HEK293 (cell line): ENCODE measurements at regions of chr6 and their contacts with region 1.

Region 1: GRCh38 chr6:33248925-33249731 is 22.5 kb downstream of the VPS52 start:
- H3K4me3 ChIP-seq: peak overlapping the region; percentile 62
- H3K27ac ChIP-seq: peak overlapping the region; percentile 88
- H3K4me1 ChIP-seq: peaks cover 12% of the 10 kb centered on the region
- CTCF ChIP-seq: 0 out of 2 replicates have a peak, but pooled peaks have one; percentile 35

Region 2: DNA sequence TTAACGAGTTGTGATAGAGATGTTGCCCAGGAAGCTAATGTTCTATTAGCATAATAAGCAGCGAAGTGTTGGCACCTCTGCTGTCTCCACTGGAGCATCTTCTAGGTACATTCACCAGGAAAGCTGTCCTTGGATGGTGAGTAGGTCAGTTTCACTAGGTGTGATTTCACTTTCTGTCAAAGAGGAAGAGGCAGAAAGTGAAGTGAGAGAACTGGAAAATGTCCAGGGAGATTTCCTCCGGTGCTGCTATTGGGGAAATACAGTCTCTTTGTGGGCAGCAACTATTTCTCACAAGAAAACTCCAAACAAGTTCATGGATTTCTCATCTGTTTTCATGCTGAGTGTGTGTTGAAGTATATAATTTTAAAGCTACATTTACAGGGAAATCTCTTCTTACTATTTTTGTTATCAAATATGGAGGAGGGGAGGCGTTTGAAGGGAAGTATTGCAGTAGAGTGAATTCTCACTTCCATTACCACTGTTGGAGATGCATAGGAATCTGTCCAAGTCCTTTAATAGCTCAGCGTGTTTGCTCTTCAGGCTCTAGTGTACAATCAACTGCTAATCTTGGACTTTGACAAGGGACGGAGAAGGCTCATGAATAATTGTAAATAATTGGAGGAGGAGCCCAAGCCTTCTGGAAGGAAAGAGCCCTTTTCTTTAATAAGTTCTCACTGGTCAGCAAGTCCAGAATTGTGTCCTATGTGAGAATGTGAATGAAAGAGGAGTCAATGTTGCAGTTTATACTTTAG is 861.4 kb before region 1 on chr6:
- CTCF ChIA-PET with region 1: no interaction called
- POLR2A ChIA-PET with region 1: no interaction called
- H3K4me3 ChIP-seq: no peak overlapping the region
- H3K27ac ChIP-seq: no peak overlapping the region
- H3K4me1 ChIP-seq: no peaks in the 10 kb centered on the region
- CTCF ChIP-seq: no peak

Region 3: DNA sequence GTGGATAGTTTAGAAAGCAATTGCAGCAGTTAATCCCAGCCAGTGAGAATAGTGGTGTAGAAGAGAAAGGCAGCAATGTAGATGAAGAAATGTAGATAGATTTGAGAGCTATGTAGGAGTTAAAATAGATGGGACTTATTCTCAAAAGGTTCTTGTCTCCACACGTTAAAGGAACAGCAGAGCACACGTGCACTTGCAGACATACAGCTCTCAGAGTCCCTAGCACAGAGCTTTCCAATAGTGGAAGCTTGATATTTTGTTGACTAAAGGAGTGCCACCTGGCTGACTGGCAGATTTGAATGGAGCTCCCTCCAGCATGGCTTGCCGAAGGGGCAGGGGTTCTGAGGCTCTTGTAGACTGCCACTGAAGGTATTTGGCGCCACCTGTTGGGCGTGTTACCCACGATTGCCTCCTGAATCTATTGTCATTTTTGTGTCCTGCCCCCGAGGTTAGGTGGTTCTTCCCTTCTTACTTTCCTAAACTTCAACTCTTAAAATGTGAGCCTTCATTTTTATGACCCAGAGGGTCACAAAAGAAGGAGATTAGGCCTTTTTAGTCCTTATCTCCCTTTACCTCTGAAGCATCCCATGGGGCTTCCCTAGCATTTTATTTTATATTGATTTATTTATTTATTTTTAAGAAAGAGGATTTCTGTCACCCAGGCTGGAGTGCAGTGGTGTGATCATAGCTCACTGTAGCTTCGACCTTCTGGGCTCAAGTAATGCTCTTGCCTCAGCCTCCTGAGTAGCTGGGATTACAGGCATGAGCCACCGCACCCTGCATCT is 264.3 kb before region 1 on chr6:
- CTCF ChIA-PET with region 1: interaction called, 10 read pairs
- POLR2A ChIA-PET with region 1: interaction called, 8 read pairs
- H3K4me3 ChIP-seq: no peak overlapping the region
- H3K27ac ChIP-seq: no peak overlapping the region
- H3K4me1 ChIP-seq: peaks cover 4% of the 10 kb centered on the region; the same call in 1 of the 2 replicates
- CTCF ChIP-seq: peak; percentile 85

Region 4: GRCh38 chr6:33118525-33119123 is 130.5 kb before region 1 on chr6:
- CTCF ChIA-PET with region 1: interaction called, 76 read pairs
- POLR2A ChIA-PET with region 1: no interaction called
- H3K4me3 ChIP-seq: no peak overlapping the region
- H3K27ac ChIP-seq: no peak overlapping the region
- H3K4me1 ChIP-seq: no peaks in the 10 kb centered on the region
- CTCF ChIP-seq: 0 out of 2 replicates have a peak, but pooled peaks have one; percentile 20

Region 5: DNA sequence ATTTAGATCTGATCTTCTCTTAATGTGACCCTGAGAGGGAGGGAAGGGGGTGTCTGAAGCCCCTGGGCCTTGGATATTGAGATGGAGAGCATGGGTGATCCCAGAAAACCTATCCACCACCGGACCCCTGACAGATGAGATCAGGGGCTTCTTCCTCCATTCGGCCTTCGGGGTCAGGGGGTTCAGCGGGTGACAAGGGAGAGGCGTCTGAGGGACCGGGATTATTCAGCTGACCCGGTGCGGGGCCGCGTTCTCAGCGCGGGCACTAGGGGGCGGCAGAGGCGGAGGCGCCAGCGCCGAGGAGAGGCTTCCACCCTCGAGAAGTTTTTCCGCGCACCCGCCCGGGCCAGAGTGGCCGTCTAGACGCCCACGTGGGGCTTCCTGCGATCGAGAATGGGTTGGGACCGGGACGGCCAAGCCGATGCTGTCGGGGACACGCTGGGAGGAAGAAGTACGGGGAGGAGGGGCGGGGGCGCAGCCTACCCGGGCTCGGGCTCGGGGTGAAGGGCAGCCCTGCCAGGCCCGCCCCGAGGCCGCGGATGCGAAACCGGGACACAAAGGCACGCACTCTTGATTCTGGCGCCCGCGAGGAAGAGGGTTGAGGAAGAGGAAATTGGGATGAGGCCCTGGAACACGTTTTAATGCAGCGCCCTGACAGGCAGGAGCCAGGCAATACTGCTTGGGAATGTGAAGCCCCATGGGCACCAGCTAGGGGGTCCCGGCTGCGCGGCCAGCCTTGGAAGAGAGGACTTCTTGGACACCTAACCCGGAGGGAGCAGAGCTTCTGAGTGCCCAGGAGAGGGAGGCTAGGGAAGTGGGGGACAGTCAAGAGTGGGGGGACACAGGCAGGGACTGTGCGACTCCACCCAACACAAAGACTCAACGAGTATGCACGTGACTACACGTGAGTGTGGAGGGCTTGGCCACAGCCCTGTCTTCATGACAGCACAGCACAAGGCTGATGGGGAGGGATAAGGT is 87.5 kb before region 1 on chr6:
- CTCF ChIA-PET with region 1: interaction called, 59 read pairs
- POLR2A ChIA-PET with region 1: interaction called, 4 read pairs
- H3K4me3 ChIP-seq: peak overlapping the region; percentile 26
- H3K27ac ChIP-seq: peak overlapping the region; percentile 13; the same call in 1 of the 2 replicates
- H3K4me1 ChIP-seq: 0 out of 2 replicates have a peak, but pooled peaks cover 2% of the 10 kb centered on the region
- CTCF ChIP-seq: peak; percentile 90

Region 6: GRCh38 chr6:33208091-33208967 is 40.8 kb before region 1 on chr6 and contains the start of gene RING1:
- CTCF ChIA-PET with region 1: interaction called, 30 read pairs
- POLR2A ChIA-PET with region 1: interaction called, 30 read pairs
- H3K4me3 ChIP-seq: peak within 1 kb of the TSS; percentile 88
- H3K27ac ChIP-seq: peak within 1 kb of the TSS; percentile 95
- H3K4me1 ChIP-seq: peaks cover 21% of the 10 kb centered on the region
- CTCF ChIP-seq: no peak; the same call in 1 of the 2 replicates

Region 7: GRCh38 chr6:33264015-33264414 is 14.9 kb after region 1 on chr6:
- CTCF ChIA-PET with region 1: interaction called, 15 read pairs
- POLR2A ChIA-PET with region 1: interaction called, 12 read pairs
- H3K4me3 ChIP-seq: no peak overlapping the region
- H3K27ac ChIP-seq: no peak overlapping the region
- H3K4me1 ChIP-seq: no peaks in the 10 kb centered on the region
- CTCF ChIP-seq: no peak

Region 8: DNA sequence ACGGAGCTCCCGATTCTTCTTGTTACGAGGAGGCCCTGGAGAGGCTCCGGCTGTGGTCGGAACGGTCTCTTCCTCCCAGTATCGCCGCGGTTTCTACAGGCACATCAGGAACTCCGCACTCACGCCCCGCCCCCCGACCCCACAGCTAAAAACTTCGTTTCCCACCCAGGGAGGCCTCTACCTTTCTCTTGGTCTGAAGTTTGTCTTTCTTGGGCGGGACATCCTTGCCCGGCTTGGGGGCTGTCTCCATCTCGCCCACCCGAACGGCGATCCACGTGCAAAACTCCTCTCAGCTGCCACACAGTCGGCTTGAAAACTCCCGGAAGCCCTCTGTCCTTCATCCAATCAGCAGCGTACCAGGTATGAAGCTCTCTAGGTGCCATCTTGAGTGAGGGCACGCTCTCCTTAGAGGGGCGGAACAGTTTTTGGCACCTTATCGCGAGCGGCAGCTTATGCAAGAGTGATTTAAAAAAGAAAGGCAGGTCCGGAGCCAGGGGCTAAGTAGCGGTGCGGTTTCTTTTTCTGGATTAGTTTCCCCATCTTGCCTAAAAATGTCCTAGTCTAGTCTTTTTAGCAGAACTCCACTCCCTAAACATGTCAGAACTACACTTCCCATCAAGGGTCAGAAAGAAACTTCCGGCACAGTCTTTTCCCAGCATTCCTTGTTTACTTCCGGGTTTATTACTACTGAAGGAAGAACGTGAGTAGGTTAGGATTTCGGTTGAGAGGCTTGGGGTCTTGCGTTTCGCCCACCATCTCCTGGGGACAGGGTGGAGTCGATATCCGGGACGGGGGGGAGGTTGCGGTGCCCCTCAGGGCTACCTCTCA is 40.0 kb after region 1 on chr6 and contains the starts of genes PFDN6 and WDR46:
- CTCF ChIA-PET with region 1: interaction called, 3 read pairs
- POLR2A ChIA-PET with region 1: interaction called, 18 read pairs
- H3K4me3 ChIP-seq: peak within 1 kb of the TSS; percentile 79
- H3K27ac ChIP-seq: peak within 1 kb of the TSS; percentile 44
- H3K4me1 ChIP-seq: peaks cover 11% of the 10 kb centered on the region; the same call in 1 of the 2 replicates
- CTCF ChIP-seq: no peak